HEK293 (cell line): ENCODE measurements at regions of chr21 and their contacts with region 1.

Region 1: GRCh38 chr21:32940079-32941014 is 85.4 kb upstream of the OLIG2 start:
- H3K4me3 ChIP-seq: no peak overlapping the region
- H3K27ac ChIP-seq: no peak overlapping the region
- H3K4me1 ChIP-seq: no peaks in the 10 kb centered on the region
- CTCF ChIP-seq: peak; percentile 50; the same call in 1 of the 2 replicates

Region 2: DNA sequence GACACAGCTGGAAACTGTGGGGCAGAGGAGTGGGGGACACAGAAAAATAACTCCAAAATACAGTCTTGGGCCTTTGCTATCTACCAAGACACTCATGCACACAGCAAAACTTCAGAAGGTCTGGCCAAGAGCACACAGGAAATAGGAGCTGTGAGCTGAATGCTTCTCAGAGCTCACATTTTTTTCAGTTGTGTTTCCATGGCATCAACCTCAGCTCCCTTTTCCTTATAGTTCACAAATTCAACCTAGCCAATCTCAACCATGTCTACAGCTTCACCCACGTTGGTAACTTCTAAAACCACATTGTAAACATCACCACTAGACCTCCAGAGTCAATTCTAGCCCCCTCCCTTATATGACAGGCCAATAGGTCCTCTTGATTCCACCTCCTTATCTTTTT is 193.0 kb before region 1 on chr21:
- CTCF ChIA-PET with region 1: no interaction called
- POLR2A ChIA-PET with region 1: no interaction called
- H3K4me3 ChIP-seq: no peak overlapping the region
- H3K27ac ChIP-seq: no peak overlapping the region
- H3K4me1 ChIP-seq: peaks cover 5% of the 10 kb centered on the region; the same call in 1 of the 2 replicates
- CTCF ChIP-seq: no peak

Region 3: DNA sequence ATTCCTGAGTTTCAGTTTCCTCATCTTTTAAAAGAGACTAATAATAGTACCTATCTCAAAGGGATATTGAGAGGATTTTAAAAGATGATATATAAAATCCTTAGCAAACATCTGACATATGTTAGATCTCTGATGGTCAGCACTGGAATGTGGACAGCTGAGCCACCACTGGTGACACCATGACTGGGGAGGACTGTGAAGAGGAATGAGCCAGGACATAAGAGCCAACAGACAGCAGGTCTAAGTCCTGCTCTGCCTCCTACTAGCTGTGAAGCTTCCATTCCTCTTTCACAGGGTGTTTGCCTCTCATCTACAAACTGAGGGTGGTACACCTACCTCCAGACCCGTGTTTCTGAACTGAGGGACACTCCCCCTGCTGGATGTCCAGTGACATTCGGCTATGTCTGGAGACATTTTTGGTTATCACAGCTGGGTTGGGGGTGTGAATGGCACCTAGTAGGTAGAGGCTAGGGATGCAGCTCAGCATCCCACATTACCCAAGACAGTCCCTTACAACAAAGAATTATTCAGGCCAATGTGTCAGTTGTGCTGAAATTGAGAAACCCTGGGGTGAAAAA is 23.7 kb before region 1 on chr21:
- CTCF ChIA-PET with region 1: interaction called, 28 read pairs
- POLR2A ChIA-PET with region 1: no interaction called
- H3K4me3 ChIP-seq: no peak overlapping the region
- H3K27ac ChIP-seq: no peak overlapping the region
- H3K4me1 ChIP-seq: no peaks in the 10 kb centered on the region
- CTCF ChIP-seq: no peak

Region 4: GRCh38 chr21:32929633-32930038 is 10.7 kb before region 1 on chr21:
- CTCF ChIA-PET with region 1: interaction called, 57 read pairs
- POLR2A ChIA-PET with region 1: no interaction called
- H3K4me3 ChIP-seq: no peak overlapping the region
- H3K27ac ChIP-seq: no peak overlapping the region
- H3K4me1 ChIP-seq: no peaks in the 10 kb centered on the region
- CTCF ChIP-seq: no peak

Region 5: GRCh38 chr21:32966120-32966519 is 25.8 kb after region 1 on chr21:
- CTCF ChIA-PET with region 1: interaction called, 16 read pairs
- POLR2A ChIA-PET with region 1: no interaction called
- H3K4me3 ChIP-seq: no peak overlapping the region
- H3K27ac ChIP-seq: no peak overlapping the region
- H3K4me1 ChIP-seq: no peaks in the 10 kb centered on the region; the same call in 1 of the 2 replicates
- CTCF ChIP-seq: no peak

Region 6: DNA sequence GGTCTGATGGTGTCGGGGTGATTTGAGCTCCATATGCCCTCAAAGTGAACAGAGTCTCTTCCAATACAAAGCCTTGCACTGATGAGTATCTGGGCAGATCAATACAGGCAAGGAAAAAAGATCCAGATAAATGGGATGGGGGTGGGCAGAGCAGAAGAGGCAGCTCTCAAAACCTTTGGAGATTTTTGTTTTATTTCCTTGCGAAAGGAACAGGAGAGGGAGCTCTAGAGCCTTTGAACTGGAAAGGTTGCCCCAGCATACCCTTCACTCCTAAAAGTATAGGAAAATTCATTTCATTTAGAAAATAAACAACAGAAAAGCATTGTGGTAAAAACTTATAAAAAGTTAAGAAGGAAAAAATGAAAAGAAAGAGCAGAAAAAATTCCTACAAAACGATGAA is 54.0 kb after region 1 on chr21:
- CTCF ChIA-PET with region 1: interaction called, 15 read pairs
- POLR2A ChIA-PET with region 1: no interaction called
- H3K4me3 ChIP-seq: no peak overlapping the region
- H3K27ac ChIP-seq: no peak overlapping the region
- H3K4me1 ChIP-seq: no peaks in the 10 kb centered on the region
- CTCF ChIP-seq: no peak

Region 7: DNA sequence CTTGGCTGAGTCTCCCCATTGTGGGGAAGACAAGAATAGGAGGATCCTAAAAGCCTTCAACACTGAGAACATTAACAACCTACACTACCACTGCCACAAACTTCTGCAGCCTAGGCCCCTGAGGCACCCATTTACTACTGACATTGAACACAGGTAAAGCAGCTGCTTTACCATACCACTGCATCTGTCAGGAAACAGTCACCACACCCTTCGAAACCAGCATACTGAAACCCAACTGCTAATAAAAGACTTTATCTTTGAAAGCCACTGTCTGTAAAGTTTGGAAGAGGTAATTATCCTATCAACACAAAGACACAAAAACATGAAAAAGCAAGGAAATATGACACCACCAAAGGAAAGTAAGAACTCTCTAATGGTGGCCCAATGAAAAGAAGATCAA is 391.8 kb after region 1 on chr21:
- CTCF ChIA-PET with region 1: no interaction called
- POLR2A ChIA-PET with region 1: no interaction called
- H3K4me3 ChIP-seq: no peak overlapping the region
- H3K27ac ChIP-seq: no peak overlapping the region
- H3K4me1 ChIP-seq: no peaks in the 10 kb centered on the region
- CTCF ChIP-seq: no peak